ENCODE measurements at regions of chr22 and their contacts with region 1.

Region 1: DNA sequence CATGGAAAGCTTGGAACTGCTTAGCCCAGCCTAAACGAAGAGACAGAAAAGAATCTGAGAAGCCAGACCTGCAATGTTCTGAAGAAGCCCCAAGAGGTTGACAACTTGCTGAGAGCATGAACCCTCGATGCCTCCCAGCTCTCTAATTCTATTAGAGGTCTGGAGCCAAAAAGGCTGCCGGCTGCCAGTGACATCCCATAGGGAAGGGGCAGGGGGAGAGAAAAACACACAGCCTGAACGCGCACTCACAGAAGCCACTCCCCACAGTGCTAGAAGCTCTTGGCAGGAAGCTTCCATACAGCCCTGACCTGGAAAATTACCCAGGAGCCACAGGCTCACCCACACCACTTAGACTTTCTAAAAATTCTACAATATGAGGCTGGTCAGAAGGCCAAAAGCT is 18.3 kb downstream of the POLDIP3 start:
- DNase-seq: no peak

Region 2: GRCh38 chr22:42553475-42554361 is 42.6 kb before region 1 on chr22 and contains the start of gene SERHL2:
- intact Hi-C with region 1: loop called in 1 of 2 experiments (anchors 5 kb)
- DNase-seq: peak; percentile 95
- total RNA-seq, gene SERHL2: 1.3 to 2.0 TPM

Measured in posterior vena cava (tissue), 2 donors.